MCF 10A (cell line): ENCODE measurements at regions of chr16 and their contacts with region 1.

Region 1: GRCh38 chr16:720990-721764 is at the start of gene ANTKMT:
- DNase-seq: peak; percentile 82
- H3K4me3 Mint-ChIP-seq: peak within 1 kb of the TSS; percentile 78
- H3K27ac Mint-ChIP-seq: peak within 1 kb of the TSS; percentile 59
- H3K4me1 Mint-ChIP-seq: peaks cover 9% of the 10 kb centered on the region
- H3K27me3 Mint-ChIP-seq: no peaks in the 10 kb centered on the region
- CTCF ChIP-seq: no peak
- total RNA-seq, gene ANTKMT: 54.7 and 55.8 TPM in 2 replicates

Region 2: GRCh38 chr16:689175-689901 is 31.8 kb before region 1 on chr16:
- CTCF ChIA-PET with region 1: interaction called, 3 read pairs
- POLR2A ChIA-PET with region 1: interaction called, 25 read pairs
- intact Hi-C with region 1: no loop called
- DNase-seq: no peak
- H3K4me3 Mint-ChIP-seq: peak overlapping the region; percentile 87
- H3K27ac Mint-ChIP-seq: peak overlapping the region; percentile 86
- H3K4me1 Mint-ChIP-seq: peaks cover 10% of the 10 kb centered on the region
- H3K27me3 Mint-ChIP-seq: no peaks in the 10 kb centered on the region
- CTCF ChIP-seq: no peak

Region 3: DNA sequence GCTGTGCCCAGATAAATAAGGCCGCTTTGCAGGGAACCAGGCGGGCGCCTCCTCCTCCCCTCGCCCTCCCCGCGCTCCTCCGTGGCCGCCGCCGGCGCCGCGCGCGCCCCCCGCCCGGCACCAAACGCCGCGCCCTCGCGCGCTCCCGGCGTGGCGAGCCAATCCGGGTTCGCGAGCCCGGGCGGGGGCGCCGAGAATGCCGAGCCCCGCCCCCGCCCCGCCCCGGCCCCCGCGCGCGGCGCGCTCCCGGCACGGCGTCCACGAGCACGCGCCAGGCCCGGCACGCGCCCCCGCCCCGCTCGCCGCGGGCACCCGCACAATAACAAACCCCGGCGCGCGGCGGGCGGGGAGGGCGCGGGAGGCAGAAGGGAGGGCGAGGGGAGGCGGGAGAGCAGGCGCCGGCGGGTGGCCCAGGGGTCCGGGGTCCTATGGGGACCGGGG is 15.4 kb before region 1 on chr16 and contains the start of gene FBXL16:
- CTCF ChIA-PET with region 1: interaction called, 11 read pairs
- POLR2A ChIA-PET with region 1: interaction called, 124 read pairs
- intact Hi-C with region 1: no loop called
- DNase-seq: peak; percentile 63
- H3K4me3 Mint-ChIP-seq: peak within 1 kb of the TSS; percentile 83
- H3K27ac Mint-ChIP-seq: peak within 1 kb of the TSS; percentile 67
- H3K4me1 Mint-ChIP-seq: peaks cover 17% of the 10 kb centered on the region
- H3K27me3 Mint-ChIP-seq: no peaks in the 10 kb centered on the region
- CTCF ChIP-seq: no peak
- total RNA-seq, gene FBXL16: 40.5 and 48.2 TPM in 2 replicates

Region 4: GRCh38 chr16:760545-761343 is 39.6 kb after region 1 on chr16 and contains the start of gene MSLN:
- CTCF ChIA-PET with region 1: no interaction called
- POLR2A ChIA-PET with region 1: interaction called, 17 read pairs
- intact Hi-C with region 1: no loop called
- DNase-seq: peak; percentile 76
- H3K4me3 Mint-ChIP-seq: peak within 1 kb of the TSS; percentile 60
- H3K27ac Mint-ChIP-seq: peak within 1 kb of the TSS; percentile 61
- H3K4me1 Mint-ChIP-seq: peaks cover 10% of the 10 kb centered on the region
- H3K27me3 Mint-ChIP-seq: no peaks in the 10 kb centered on the region
- CTCF ChIP-seq: no peak
- total RNA-seq, gene MSLN: 18.1 and 25.2 TPM in 2 replicates

Region 5: GRCh38 chr16:788394-789126 is 67.4 kb after region 1 on chr16 and contains the start of gene CHTF18:
- CTCF ChIA-PET with region 1: interaction called, 7 read pairs
- POLR2A ChIA-PET with region 1: interaction called, 14 read pairs
- intact Hi-C with region 1: loop called (anchors 5 kb)
- DNase-seq: peak; percentile 87
- H3K4me3 Mint-ChIP-seq: peak within 1 kb of the TSS; percentile 77
- H3K27ac Mint-ChIP-seq: no peak within 1 kb of the TSS
- H3K4me1 Mint-ChIP-seq: peaks cover under 1% of the 10 kb centered on the region
- H3K27me3 Mint-ChIP-seq: no peaks in the 10 kb centered on the region
- CTCF ChIP-seq: no peak
- total RNA-seq, gene CHTF18: 22.7 and 30.9 TPM in 2 replicates